ENCODE measurements at regions of chr5 and their contacts with region 1.

Region 1: GRCh38 chr5:62287236-62287635 is 18.8 kb upstream of the KIF2A start:
- DNase-seq: no peak
- H3K4me3 ChIP-seq: no peak overlapping the region
- H3K27ac ChIP-seq: peak overlapping the region in 1 of 4 donors; percentile 29
- H3K4me1 ChIP-seq: peaks cover 0 to 22% (median 2%) of the 10 kb centered on the region in 4 donors
- H3K27me3 ChIP-seq: no peaks in the 10 kb centered on the region
- CTCF ChIP-seq: no peak
- EP300 ChIP-seq: no peak
- POLR2A ChIP-seq: no peak

Region 2: GRCh38 chr5:62340392-62340791 is 53.2 kb after region 1 on chr5:
- in situ Hi-C with region 1: no loop called
- intact Hi-C with region 1: loop called (anchors 1 kb)
- DNase-seq: no peak
- H3K4me3 ChIP-seq: no peak overlapping the region
- H3K27ac ChIP-seq: no peak overlapping the region
- H3K4me1 ChIP-seq: no peaks in the 10 kb centered on the region
- H3K27me3 ChIP-seq: no peaks in the 10 kb centered on the region
- CTCF ChIP-seq: peak in 3 of 5 experiments; percentile 20 to 22 (median 21)
- EP300 ChIP-seq: no peak
- POLR2A ChIP-seq: no peak